CD4-positive, alpha-beta T cell (primary cell): ENCODE measurements at regions of chr3 and their contacts with region 1.

Region 1: GRCh38 chr3:188320757-188321156 is 166.8 kb downstream of the LPP start:
- DNase-seq: no peak
- ATAC-seq: no peak
- H3K4me3 ChIP-seq: no peak overlapping the region
- H3K4me3 Mint-ChIP-seq: no peak overlapping the region
- H3K27ac ChIP-seq: no peak overlapping the region
- H3K27ac Mint-ChIP-seq: no peak overlapping the region
- H3K4me1 ChIP-seq: peaks cover 21% of the 10 kb centered on the region
- H3K4me1 Mint-ChIP-seq: peaks cover 56% of the 10 kb centered on the region
- H3K27me3 ChIP-seq: no peaks in the 10 kb centered on the region
- H3K27me3 Mint-ChIP-seq: no peaks in the 10 kb centered on the region
- CTCF ChIP-seq: no peak

Region 2: GRCh38 chr3:188339410-188340295 is 18.9 kb after region 1 on chr3:
- CTCF ChIA-PET with region 1: no interaction called
- POLR2A ChIA-PET with region 1: no interaction called
- intact Hi-C with region 1: loop called in 1 of 2 experiments (anchors 2 kb)
- DNase-seq: peak in 3 of 14 experiments; percentile 39 to 72 (median 41)
- ATAC-seq: peak; percentile 79
- H3K4me3 ChIP-seq: peak overlapping the region; percentile 6
- H3K4me3 Mint-ChIP-seq: peak overlapping the region; percentile 66
- H3K27ac ChIP-seq: no peak overlapping the region
- H3K27ac Mint-ChIP-seq: peak overlapping the region; percentile 67
- H3K4me1 ChIP-seq: peaks cover 7% of the 10 kb centered on the region
- H3K4me1 Mint-ChIP-seq: peaks cover 24% of the 10 kb centered on the region
- H3K27me3 ChIP-seq: no peaks in the 10 kb centered on the region
- H3K27me3 Mint-ChIP-seq: no peaks in the 10 kb centered on the region
- CTCF ChIP-seq: no peak